GM10248 (cell line): ENCODE measurements at regions of chr2 and their contacts with region 1.

Region 1: DNA sequence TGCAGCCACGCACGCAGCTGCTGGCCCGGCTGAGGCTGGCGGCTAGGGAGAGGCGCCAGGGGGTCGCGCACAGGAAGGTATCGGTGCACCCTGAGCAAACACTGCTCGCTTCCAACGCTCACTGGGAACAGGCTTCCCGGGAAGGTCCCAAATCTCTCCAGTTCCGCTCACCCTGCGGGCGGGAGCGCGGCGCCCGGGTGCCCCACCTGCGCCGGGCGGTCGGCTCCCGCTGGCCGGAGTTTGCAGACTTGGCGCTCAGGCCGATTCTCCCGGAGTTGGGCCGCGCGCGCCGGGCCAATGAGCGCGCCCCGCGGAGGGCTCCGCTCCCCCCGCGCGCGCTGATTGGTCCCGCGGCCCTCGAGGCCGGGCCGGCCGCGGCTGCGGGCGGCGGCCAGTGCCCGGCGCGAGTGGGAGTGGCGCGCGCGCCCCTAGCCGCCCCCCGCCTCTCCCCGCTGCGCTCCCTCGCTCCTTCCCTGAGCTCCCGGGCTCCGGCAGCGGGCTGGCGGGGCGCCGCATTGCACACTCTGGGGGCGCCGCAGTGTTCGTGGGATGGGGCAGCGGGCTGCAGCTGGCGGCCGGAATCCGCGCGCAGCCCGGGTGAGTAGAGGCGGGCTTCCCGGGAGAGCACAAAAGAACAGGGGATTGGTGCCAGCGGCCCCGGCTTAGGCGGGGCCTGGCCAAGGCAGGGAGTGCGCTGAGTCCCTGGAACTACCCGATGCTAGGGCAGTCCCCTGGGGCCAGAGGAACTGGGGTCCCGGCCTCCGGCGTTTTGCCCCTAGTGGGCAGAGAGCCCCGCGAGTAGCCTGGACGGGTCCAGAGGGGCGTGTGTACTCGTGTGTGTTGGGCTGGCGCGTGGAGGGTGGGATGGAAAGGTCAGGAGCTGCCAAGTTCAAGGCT is at the start of gene LYPD6:
- DNase-seq: peak; percentile 45
- CTCF ChIP-seq: no peak

Region 2: GRCh38 chr2:149313512-149313972 is 16.8 kb before region 1 on chr2:
- CTCF ChIA-PET with region 1: interaction called, 10 read pairs
- POLR2A ChIA-PET with region 1: no interaction called
- DNase-seq: peak; percentile 62
- CTCF ChIP-seq: peak; percentile 46